HepG2 (cell line): ENCODE measurements at regions of chr11 and their contacts with region 1.

Region 1: GRCh38 chr11:133834682-133835592 is 10.4 kb downstream of the SPATA19 start:
- DNase-seq: peak; percentile 61
- ATAC-seq: peak; percentile 86
- H3K4me3 ChIP-seq: no peak overlapping the region
- H3K27ac ChIP-seq: no peak overlapping the region
- H3K4me1 ChIP-seq: no peaks in the 10 kb centered on the region
- H3K27me3 ChIP-seq: no peaks in the 10 kb centered on the region
- CTCF ChIP-seq: peak; percentile 79
- EP300 ChIP-seq: no peak
- POLR2A ChIP-seq: no peak
- RAD21 ChIP-seq: peak; percentile 47; the same call in 1 of the 2 replicates

Region 2: GRCh38 chr11:133082851-133083488 is 752.0 kb before region 1 on chr11:
- CTCF ChIA-PET with region 1: interaction called, 13 read pairs
- POLR2A ChIA-PET with region 1: no interaction called
- in situ Hi-C with region 1: loop called (anchors 10 kb)
- intact Hi-C with region 1: loop called (anchors 1 kb)
- DNase-seq: peak; percentile 12
- ATAC-seq: peak; percentile 95
- H3K4me3 ChIP-seq: peak overlapping the region in 2 of 3 experiments; percentile 15 to 43; a peak in 1 of 6 replicates
- H3K27ac ChIP-seq: no peak overlapping the region
- H3K4me1 ChIP-seq: no peaks in the 10 kb centered on the region
- H3K27me3 ChIP-seq: peaks cover 0 to 20% of the 10 kb centered on the region in 2 experiments; a peak in 3 of 5 replicates
- CTCF ChIP-seq: peak; percentile 59; the same call in 1 of the 2 replicates
- EP300 ChIP-seq: no peak
- POLR2A ChIP-seq: no peak
- RAD21 ChIP-seq: peak; percentile 93

Region 3: DNA sequence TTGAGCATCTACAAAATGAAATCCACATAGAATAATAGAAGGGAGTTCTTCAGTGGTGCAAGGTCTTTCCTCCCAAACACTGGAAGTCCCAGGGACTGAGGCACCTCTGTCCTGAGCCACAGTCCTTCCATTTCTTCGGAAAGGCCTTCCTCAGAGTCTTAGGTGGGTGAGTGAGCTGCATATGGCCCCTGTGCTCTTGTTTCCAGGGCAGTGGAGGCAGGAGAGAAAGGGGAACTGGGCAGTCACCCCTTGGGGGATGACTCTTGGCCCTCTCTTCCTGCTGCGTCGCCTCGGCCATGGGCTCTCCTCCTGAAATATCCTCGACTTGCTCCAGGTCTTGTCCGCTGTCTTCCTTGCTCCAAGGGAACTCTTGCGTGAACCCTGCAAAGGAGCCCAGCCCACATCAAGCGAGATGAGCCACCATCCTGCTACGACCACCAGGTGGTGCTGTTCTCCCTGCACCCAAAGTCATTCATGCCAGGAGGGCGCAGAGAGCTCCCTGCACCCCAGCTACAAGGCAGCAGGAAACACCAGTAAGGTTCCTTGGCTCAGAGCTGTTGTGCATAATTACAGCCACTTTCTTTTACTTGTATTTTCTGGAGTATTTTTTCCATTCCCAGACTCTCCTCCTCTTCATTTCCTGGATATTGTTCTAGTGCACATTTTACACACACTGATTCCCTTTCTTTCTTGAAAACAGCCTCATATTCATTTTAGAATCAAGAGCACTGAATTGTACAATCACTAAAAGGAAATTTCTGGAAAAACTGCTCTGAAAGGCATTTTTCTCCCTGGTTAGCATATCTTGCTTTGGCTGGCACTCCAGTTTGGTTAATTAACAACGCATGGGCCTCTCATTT is 700.4 kb before region 1 on chr11:
- CTCF ChIA-PET with region 1: interaction called, 17 read pairs
- POLR2A ChIA-PET with region 1: no interaction called
- in situ Hi-C with region 1: no loop called
- intact Hi-C with region 1: no loop called
- DNase-seq: peak; percentile 39
- ATAC-seq: peak; percentile 96
- H3K4me3 ChIP-seq: no peak overlapping the region
- H3K27ac ChIP-seq: no peak overlapping the region
- H3K4me1 ChIP-seq: no peaks in the 10 kb centered on the region
- H3K27me3 ChIP-seq: no peaks in the 10 kb centered on the region
- CTCF ChIP-seq: peak; percentile 86
- EP300 ChIP-seq: no peak
- POLR2A ChIP-seq: no peak
- RAD21 ChIP-seq: no peak; the same call in 1 of the 2 replicates

Region 4: DNA sequence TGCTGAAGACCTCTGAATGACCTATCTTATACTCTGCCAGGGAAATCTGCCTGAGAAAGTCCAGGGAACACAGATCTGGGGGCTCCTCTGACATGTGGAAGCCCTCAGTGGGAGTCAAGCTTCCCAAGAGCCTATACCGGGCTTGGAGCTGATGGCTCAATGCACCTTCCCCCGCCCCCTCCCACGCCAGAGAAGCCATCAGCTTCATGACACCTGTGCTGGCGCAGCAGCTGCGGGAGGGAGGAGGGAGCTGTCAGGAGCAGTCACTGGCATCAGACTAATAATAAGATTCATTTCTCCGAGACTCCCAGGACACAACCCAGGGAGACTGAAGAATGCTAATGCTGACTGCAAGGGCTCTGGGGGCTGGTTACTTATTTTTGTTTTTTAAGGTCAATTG is 37.4 kb before region 1 on chr11:
- CTCF ChIA-PET with region 1: no interaction called
- POLR2A ChIA-PET with region 1: no interaction called
- in situ Hi-C with region 1: no loop called
- intact Hi-C with region 1: no loop called
- DNase-seq: no peak
- ATAC-seq: no peak
- H3K4me3 ChIP-seq: no peak overlapping the region
- H3K27ac ChIP-seq: no peak overlapping the region
- H3K4me1 ChIP-seq: no peaks in the 10 kb centered on the region
- H3K27me3 ChIP-seq: peaks cover 1 to 3% of the 10 kb centered on the region in 2 experiments; a peak in 2 of 5 replicates
- CTCF ChIP-seq: no peak
- EP300 ChIP-seq: no peak
- POLR2A ChIP-seq: no peak
- RAD21 ChIP-seq: no peak